Sciatic nerve (tissue), 2 donors: ENCODE measurements at regions of chr1 and their contacts with region 1.

Region 1: GRCh38 chr1:182861994-182862393 is 22.8 kb downstream of the DHX9 start:
- DNase-seq: no peak
- ATAC-seq: no peak

Region 2: GRCh38 chr1:184724843-184725242 is 1862.8 kb after region 1 on chr1:
- intact Hi-C with region 1: loop called (anchors 5 kb)
- DNase-seq: no peak
- ATAC-seq: no peak